ENCODE measurements at regions of chr12 and their contacts with region 1.

Region 1: GRCh38 chr12:45839917-45840316 is 110.4 kb downstream of the ARID2 start:
- DNase-seq: no peak
- H3K4me3 ChIP-seq: no peak overlapping the region
- H3K27ac ChIP-seq: no peak overlapping the region
- H3K4me1 ChIP-seq: no peaks in the 10 kb centered on the region
- H3K27me3 ChIP-seq: no peaks in the 10 kb centered on the region
- CTCF ChIP-seq: no peak
- POLR2A ChIP-seq: no peak

Region 2: DNA sequence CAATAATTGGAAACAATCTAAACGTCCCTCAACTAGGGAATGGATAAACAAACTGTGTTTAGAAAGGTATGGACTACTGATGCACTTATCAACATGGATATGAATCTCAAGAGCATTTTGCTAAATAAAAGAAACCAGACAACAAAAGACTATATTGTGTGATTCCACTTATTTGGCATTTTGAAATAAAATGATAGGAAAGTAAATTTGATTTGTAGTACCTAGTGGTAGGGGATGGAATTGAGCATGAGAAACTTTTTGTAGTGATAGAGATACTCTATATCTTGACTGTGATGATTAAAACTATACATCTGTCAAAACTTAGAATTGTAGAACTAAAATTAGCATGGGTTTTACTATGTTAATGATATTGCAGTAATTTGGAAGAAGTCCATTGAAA is 23.3 kb before region 1 on chr12:
- CTCF ChIA-PET with region 1: no interaction called
- POLR2A ChIA-PET with region 1: no interaction called
- dilution Hi-C with region 1: no loop called
- intact Hi-C with region 1: no loop called
- DNase-seq: no peak
- H3K4me3 ChIP-seq: no peak overlapping the region
- H3K27ac ChIP-seq: no peak overlapping the region
- H3K4me1 ChIP-seq: no peaks in the 10 kb centered on the region
- H3K27me3 ChIP-seq: no peaks in the 10 kb centered on the region
- CTCF ChIP-seq: no peak
- POLR2A ChIP-seq: no peak

Region 3: DNA sequence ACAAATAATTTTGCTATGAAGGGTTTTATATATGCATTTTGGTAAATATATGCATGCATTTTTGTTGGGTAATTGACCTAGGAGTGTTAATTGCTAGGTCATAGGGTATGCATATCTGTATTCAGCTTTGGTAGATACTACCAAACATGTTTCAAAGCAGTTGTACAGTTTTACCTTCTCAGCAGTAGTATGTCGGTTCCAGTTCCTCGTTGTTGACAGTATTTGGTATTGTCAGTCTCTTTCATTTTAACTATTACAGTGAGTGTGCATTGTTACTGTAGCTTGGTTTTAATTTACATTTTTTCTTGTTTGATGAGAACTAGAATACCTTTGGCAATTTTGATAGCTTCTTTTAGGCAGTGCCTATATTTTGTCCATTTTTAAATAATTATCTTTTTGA is 11.5 kb before region 1 on chr12:
- CTCF ChIA-PET with region 1: interaction called, 13 read pairs
- POLR2A ChIA-PET with region 1: no interaction called
- dilution Hi-C with region 1: no loop called
- intact Hi-C with region 1: no loop called
- DNase-seq: no peak
- H3K4me3 ChIP-seq: no peak overlapping the region
- H3K27ac ChIP-seq: no peak overlapping the region
- H3K4me1 ChIP-seq: no peaks in the 10 kb centered on the region
- H3K27me3 ChIP-seq: no peaks in the 10 kb centered on the region
- CTCF ChIP-seq: no peak
- POLR2A ChIP-seq: no peak

Region 4: DNA sequence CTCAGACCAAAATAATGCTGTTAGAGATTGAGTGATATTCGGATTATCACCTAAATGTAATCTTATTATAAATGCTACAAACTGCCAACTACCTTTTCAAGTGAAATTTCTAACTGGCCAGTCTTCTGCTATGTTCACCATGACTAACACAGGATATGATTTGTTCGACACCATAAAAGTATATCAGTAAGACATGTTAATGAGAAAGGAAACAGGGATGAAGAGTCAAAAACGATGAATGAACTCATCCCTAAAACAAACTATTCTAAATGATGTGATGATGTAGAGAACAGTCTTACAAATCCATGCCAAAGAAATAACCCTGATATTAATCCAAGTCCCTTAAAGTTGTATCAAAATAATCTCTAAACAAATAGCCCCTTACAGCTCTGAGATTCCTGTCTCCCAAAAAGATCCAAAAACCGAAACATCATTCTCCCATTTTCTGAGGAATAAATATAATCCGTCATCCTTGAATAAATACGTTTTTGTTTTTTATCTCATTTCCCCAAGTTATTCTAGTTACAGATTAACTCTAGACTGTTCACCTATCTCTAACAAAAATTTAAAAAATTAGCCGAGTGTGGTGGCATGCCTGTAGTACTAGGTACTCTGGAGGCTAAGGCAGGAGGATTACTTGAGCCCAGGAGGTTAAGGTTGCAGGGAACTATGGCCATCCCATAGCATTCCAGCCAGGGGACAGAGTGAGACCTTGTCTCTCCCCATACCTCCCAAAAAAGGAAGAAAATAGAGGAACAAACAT is 141.3 kb after region 1 on chr12:
- CTCF ChIA-PET with region 1: no interaction called
- POLR2A ChIA-PET with region 1: no interaction called
- dilution Hi-C with region 1: no loop called
- intact Hi-C with region 1: no loop called
- DNase-seq: peak; percentile 53
- H3K4me3 ChIP-seq: no peak overlapping the region
- H3K27ac ChIP-seq: no peak overlapping the region
- H3K4me1 ChIP-seq: peaks cover 12% of the 10 kb centered on the region
- H3K27me3 ChIP-seq: no peaks in the 10 kb centered on the region
- CTCF ChIP-seq: no peak
- POLR2A ChIP-seq: no peak

Region 5: GRCh38 chr12:46133751-46134150 is 293.8 kb after region 1 on chr12:
- CTCF ChIA-PET with region 1: no interaction called
- POLR2A ChIA-PET with region 1: no interaction called
- dilution Hi-C with region 1: no loop called
- intact Hi-C with region 1: no loop called
- DNase-seq: no peak
- H3K4me3 ChIP-seq: no peak overlapping the region
- H3K27ac ChIP-seq: no peak overlapping the region
- H3K4me1 ChIP-seq: no peaks in the 10 kb centered on the region
- H3K27me3 ChIP-seq: peaks cover 16 to 55% of the 10 kb centered on the region in 2 experiments
- CTCF ChIP-seq: no peak
- POLR2A ChIP-seq: no peak